ENCODE measurements at regions of chr17 and their contacts with region 1.

Region 1: GRCh38 chr17:8057691-8058114 is 18.8 kb downstream of the ALOX15B start:
- DNase-seq: peak in 11 of 14 experiments; percentile 19 to 83 (median 35)
- ATAC-seq: peak; percentile 96
- H3K4me3 ChIP-seq: no peak overlapping the region
- H3K4me3 Mint-ChIP-seq: no peak overlapping the region
- H3K27ac ChIP-seq: no peak overlapping the region
- H3K27ac Mint-ChIP-seq: no peak overlapping the region
- H3K4me1 ChIP-seq: peaks cover 15% of the 10 kb centered on the region
- H3K4me1 Mint-ChIP-seq: no peaks in the 10 kb centered on the region
- H3K27me3 ChIP-seq: peaks cover 5 to 38% of the 10 kb centered on the region in 2 experiments
- H3K27me3 Mint-ChIP-seq: peaks cover 58% of the 10 kb centered on the region
- CTCF ChIP-seq: peak; percentile 71

Region 2: GRCh38 chr17:7740481-7741001 is 317.2 kb before region 1 on chr17:
- CTCF ChIA-PET with region 1: interaction called, 7 read pairs
- POLR2A ChIA-PET with region 1: no interaction called
- intact Hi-C with region 1: loop called (anchors 1 to 2 kb)
- DNase-seq: no peak
- ATAC-seq: no peak
- H3K4me3 ChIP-seq: no peak overlapping the region
- H3K4me3 Mint-ChIP-seq: no peak overlapping the region
- H3K27ac ChIP-seq: no peak overlapping the region
- H3K27ac Mint-ChIP-seq: no peak overlapping the region
- H3K4me1 ChIP-seq: no peaks in the 10 kb centered on the region
- H3K4me1 Mint-ChIP-seq: no peaks in the 10 kb centered on the region
- H3K27me3 ChIP-seq: peaks cover 6 to 12% of the 10 kb centered on the region in 2 experiments
- H3K27me3 Mint-ChIP-seq: peaks cover 39% of the 10 kb centered on the region
- CTCF ChIP-seq: no peak

Region 3: DNA sequence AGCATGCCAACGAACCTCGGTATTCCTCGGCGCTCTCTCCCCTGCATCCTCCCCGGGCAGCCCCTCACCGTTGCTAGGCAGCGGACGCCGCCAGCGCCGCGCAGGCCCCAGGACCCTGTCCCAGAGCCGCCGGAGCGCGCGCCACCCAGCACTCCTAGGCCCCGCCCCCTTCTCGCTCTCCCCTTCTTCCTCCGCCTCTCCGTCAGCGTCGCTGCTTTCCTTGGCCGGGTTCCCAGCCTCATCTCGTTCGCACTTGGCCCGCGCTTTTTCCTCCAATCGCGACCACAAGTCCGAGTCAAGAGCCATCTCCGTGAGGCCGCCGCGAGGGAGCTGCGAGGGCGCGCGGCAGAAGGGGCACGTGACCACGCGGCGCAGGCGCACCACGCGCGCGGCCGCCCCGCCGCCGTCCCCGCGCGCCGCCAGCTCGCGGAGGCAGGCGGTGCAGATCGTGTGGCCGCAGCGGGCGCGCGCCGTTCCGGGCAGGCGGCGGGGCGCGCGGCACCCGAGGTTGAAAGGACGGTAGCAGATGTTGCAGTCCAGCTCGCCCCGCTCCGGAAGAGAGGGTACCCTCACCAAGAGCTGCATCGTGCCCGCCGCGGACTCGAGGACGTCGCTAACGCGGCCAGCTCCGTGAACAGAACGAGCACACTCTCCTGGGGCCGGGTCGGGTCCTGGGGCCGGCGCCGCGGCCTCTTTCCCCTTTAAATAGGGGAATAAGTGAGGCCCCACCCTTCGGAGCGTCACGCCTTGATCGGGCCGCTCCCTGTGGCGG is 141.9 kb before region 1 on chr17 and contains the start of gene RNF227:
- CTCF ChIA-PET with region 1: interaction called, 11 read pairs
- POLR2A ChIA-PET with region 1: no interaction called
- intact Hi-C with region 1: loop called (anchors 1 kb)
- DNase-seq: peak; percentile 68 to 94 (median 74)
- ATAC-seq: peak; percentile 73
- H3K4me3 ChIP-seq: peak within 1 kb of the TSS; percentile 77
- H3K4me3 Mint-ChIP-seq: peak within 1 kb of the TSS; percentile 89
- H3K27ac ChIP-seq: peak within 1 kb of the TSS; percentile 71 to 80
- H3K27ac Mint-ChIP-seq: peak within 1 kb of the TSS; percentile 90
- H3K4me1 ChIP-seq: peaks cover 35% of the 10 kb centered on the region
- H3K4me1 Mint-ChIP-seq: peaks cover 30% of the 10 kb centered on the region
- H3K27me3 ChIP-seq: no peaks in the 10 kb centered on the region
- H3K27me3 Mint-ChIP-seq: no peaks in the 10 kb centered on the region
- CTCF ChIP-seq: no peak
- total RNA-seq, gene RNF227: 3.2 to 3.5 TPM

Region 4: GRCh38 chr17:7956228-7956965 is 101.3 kb before region 1 on chr17:
- CTCF ChIA-PET with region 1: no interaction called
- POLR2A ChIA-PET with region 1: no interaction called
- intact Hi-C with region 1: no loop called
- DNase-seq: no peak
- ATAC-seq: no peak
- H3K4me3 ChIP-seq: no peak overlapping the region
- H3K4me3 Mint-ChIP-seq: no peak overlapping the region
- H3K27ac ChIP-seq: no peak overlapping the region
- H3K27ac Mint-ChIP-seq: no peak overlapping the region
- H3K4me1 ChIP-seq: no peaks in the 10 kb centered on the region
- H3K4me1 Mint-ChIP-seq: peaks cover 3% of the 10 kb centered on the region
- H3K27me3 ChIP-seq: no peaks in the 10 kb centered on the region
- H3K27me3 Mint-ChIP-seq: peaks cover 6% of the 10 kb centered on the region
- CTCF ChIP-seq: no peak

Region 5: DNA sequence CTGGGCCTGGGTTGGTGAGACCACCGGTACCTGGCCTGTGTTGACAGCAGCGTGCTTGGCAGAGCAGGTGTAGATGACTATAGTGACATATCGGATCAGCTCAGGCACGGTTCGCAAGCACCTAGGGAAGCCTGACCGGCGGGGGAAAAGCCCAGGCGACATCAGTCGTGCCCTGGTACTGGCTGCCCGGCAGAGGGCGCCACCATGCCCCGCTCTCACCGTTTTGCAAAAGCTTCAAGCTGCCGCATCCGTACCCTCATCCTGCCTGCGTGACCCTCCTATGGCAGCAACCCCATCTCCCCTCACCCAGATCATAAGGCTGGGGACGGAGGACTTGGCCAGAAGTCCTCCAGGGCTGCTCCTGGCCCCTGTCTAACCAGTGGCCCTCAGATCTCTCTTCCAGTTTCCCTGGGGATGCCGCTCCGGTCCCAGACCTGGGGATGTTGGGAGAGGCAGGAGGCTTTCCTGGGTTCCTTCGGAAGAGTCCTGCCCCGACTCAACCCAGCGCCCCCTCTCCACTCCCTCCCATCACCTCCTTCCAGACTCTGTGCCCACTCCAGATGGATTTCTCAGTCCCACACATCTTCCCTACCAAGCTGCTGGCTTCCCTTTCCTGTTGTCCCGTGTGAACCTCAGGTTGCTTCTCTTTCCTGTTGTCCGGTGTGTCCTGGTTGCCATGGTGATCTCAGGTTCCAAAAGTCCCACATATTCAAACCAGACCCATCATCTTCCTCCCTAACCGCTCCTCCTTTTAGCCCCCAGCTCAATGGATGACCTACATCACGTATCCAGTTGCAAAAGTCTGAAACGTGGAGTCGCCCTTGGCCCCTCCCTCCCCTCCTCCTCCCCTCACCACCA is 16.2 kb after region 1 on chr17:
- CTCF ChIA-PET with region 1: interaction called, 59 read pairs
- POLR2A ChIA-PET with region 1: interaction called, 9 read pairs
- intact Hi-C with region 1: no loop called
- DNase-seq: peak; percentile 75 to 95 (median 83)
- ATAC-seq: peak; percentile 94
- H3K4me3 ChIP-seq: peak overlapping the region; percentile 31
- H3K4me3 Mint-ChIP-seq: peak overlapping the region; percentile 87
- H3K27ac ChIP-seq: no peak overlapping the region
- H3K27ac Mint-ChIP-seq: peak overlapping the region; percentile 18
- H3K4me1 ChIP-seq: peaks cover 25% of the 10 kb centered on the region
- H3K4me1 Mint-ChIP-seq: peaks cover 26% of the 10 kb centered on the region
- H3K27me3 ChIP-seq: peaks cover 27 to 39% of the 10 kb centered on the region in 2 experiments
- H3K27me3 Mint-ChIP-seq: peaks cover 44% of the 10 kb centered on the region
- CTCF ChIP-seq: peak; percentile 91

Region 6: DNA sequence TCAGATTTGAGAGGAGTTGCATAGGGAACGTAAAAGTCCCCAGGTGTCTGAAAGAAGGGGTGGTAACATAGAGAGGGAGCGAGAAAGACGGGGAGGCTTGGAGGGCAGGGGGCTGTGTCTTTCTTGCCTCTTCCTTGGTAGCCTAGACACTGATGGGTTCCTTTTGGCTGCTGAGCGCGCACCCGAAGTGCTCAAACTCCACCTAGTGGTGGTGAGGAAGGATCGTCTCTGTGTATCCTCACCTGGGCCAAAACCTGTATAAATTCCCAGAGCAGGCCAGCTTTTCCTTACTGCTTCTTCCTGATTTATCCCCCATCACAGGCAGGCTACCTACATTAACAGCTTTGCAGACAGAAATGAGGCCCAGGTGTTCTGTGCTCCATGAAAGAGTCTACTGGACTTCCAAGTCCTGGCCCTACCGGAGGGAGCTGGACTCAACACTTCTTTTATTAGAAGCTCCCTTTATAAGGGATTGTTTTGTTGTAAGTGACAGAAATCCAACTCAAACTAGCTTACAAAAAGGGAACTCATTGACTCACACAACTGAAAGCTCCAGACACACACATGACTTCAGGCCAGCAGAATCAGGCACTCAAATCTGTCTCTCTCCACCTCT is 243.0 kb after region 1 on chr17:
- CTCF ChIA-PET with region 1: no interaction called
- POLR2A ChIA-PET with region 1: no interaction called
- intact Hi-C with region 1: loop called (anchors 1 to 5 kb)
- DNase-seq: peak; percentile 39 to 87 (median 58)
- ATAC-seq: peak; percentile 96
- H3K4me3 ChIP-seq: no peak overlapping the region
- H3K4me3 Mint-ChIP-seq: peak overlapping the region; percentile 49
- H3K27ac ChIP-seq: no peak overlapping the region
- H3K27ac Mint-ChIP-seq: peak overlapping the region; percentile 8
- H3K4me1 ChIP-seq: peaks cover 10% of the 10 kb centered on the region
- H3K4me1 Mint-ChIP-seq: peaks cover 13% of the 10 kb centered on the region
- H3K27me3 ChIP-seq: no peaks in the 10 kb centered on the region
- H3K27me3 Mint-ChIP-seq: no peaks in the 10 kb centered on the region
- CTCF ChIP-seq: peak; percentile 81

Region 7: GRCh38 chr17:8997994-8998628 is 940.4 kb after region 1 on chr17:
- CTCF ChIA-PET with region 1: no interaction called
- POLR2A ChIA-PET with region 1: no interaction called
- intact Hi-C with region 1: loop called (anchors 5 kb)
- DNase-seq: peak; percentile 64 to 90 (median 76)
- ATAC-seq: peak; percentile 91
- H3K4me3 ChIP-seq: no peak overlapping the region
- H3K4me3 Mint-ChIP-seq: no peak overlapping the region
- H3K27ac ChIP-seq: no peak overlapping the region
- H3K27ac Mint-ChIP-seq: no peak overlapping the region
- H3K4me1 ChIP-seq: peaks cover 13% of the 10 kb centered on the region
- H3K4me1 Mint-ChIP-seq: peaks cover 13% of the 10 kb centered on the region
- H3K27me3 ChIP-seq: peaks cover 18 to 21% of the 10 kb centered on the region in 2 experiments
- H3K27me3 Mint-ChIP-seq: peaks cover 39% of the 10 kb centered on the region
- CTCF ChIP-seq: peak; percentile 98

Measured in CD4-positive, alpha-beta T cell (primary cell).